GM12878 (cell line): ENCODE measurements at regions of chr1 and their contacts with region 1.

Region 1: GRCh38 chr1:203361945-203362719 is 11.2 kb upstream of the FMOD start:
- DNase-seq: no peak
- ATAC-seq: peak; percentile 91
- H3K4me3 ChIP-seq: no peak overlapping the region
- H3K27ac ChIP-seq: no peak overlapping the region
- H3K4me1 ChIP-seq: no peaks in the 10 kb centered on the region
- H3K27me3 ChIP-seq: peaks cover 0 to 5% of the 10 kb centered on the region in 2 experiments; a peak in 3 of 4 replicates
- CTCF ChIP-seq: no peak
- EP300 ChIP-seq: no peak
- POLR2A ChIP-seq: no peak
- RAD21 ChIP-seq: no peak

Region 2: GRCh38 chr1:203129501-203130231 is 232.5 kb before region 1 on chr1:
- CTCF ChIA-PET with region 1: no interaction called
- POLR2A ChIA-PET with region 1: no interaction called
- RAD21 ChIA-PET with region 1: no interaction called
- SMC1A ChIA-PET with region 1: no interaction called
- in situ Hi-C with region 1: no loop called
- intact Hi-C with region 1: no loop called
- DNase-seq: no peak
- ATAC-seq: no peak
- H3K4me3 ChIP-seq: no peak overlapping the region
- H3K27ac ChIP-seq: no peak overlapping the region
- H3K4me1 ChIP-seq: no peaks in the 10 kb centered on the region
- H3K27me3 ChIP-seq: peaks cover 6 to 8% of the 10 kb centered on the region in 2 experiments
- CTCF ChIP-seq: no peak
- EP300 ChIP-seq: no peak
- POLR2A ChIP-seq: no peak
- RAD21 ChIP-seq: no peak

Region 3: GRCh38 chr1:203280996-203281395 is 81.1 kb before region 1 on chr1:
- CTCF ChIA-PET with region 1: no interaction called
- POLR2A ChIA-PET with region 1: no interaction called
- RAD21 ChIA-PET with region 1: no interaction called
- SMC1A ChIA-PET with region 1: no interaction called
- in situ Hi-C with region 1: no loop called
- intact Hi-C with region 1: no loop called
- DNase-seq: no peak
- ATAC-seq: no peak
- H3K4me3 ChIP-seq: no peak overlapping the region
- H3K27ac ChIP-seq: no peak overlapping the region
- H3K4me1 ChIP-seq: peaks cover 46% of the 10 kb centered on the region
- H3K27me3 ChIP-seq: no peaks in the 10 kb centered on the region
- CTCF ChIP-seq: 0 out of 6 replicates have a peak, but pooled peaks of 1 of the 3 experiments have one; percentile 8
- EP300 ChIP-seq: no peak
- POLR2A ChIP-seq: no peak
- RAD21 ChIP-seq: no peak

Region 4: GRCh38 chr1:203291201-203292096 is 70.7 kb before region 1 on chr1:
- CTCF ChIA-PET with region 1: no interaction called
- POLR2A ChIA-PET with region 1: no interaction called
- RAD21 ChIA-PET with region 1: no interaction called
- SMC1A ChIA-PET with region 1: no interaction called
- in situ Hi-C with region 1: no loop called
- intact Hi-C with region 1: no loop called
- DNase-seq: no peak
- ATAC-seq: no peak
- H3K4me3 ChIP-seq: peak overlapping the region; percentile 24
- H3K27ac ChIP-seq: peak overlapping the region; percentile 100
- H3K4me1 ChIP-seq: peaks cover 58% of the 10 kb centered on the region
- H3K27me3 ChIP-seq: no peaks in the 10 kb centered on the region
- CTCF ChIP-seq: no peak
- EP300 ChIP-seq: 0 out of 4 replicates have a peak, but pooled peaks of 1 of the 2 experiments have one; percentile 13
- POLR2A ChIP-seq: no peak
- RAD21 ChIP-seq: no peak

Region 5: GRCh38 chr1:203346060-203346768 is 15.9 kb before region 1 on chr1:
- CTCF ChIA-PET with region 1: interaction called, 184 read pairs
- POLR2A ChIA-PET with region 1: interaction called, 4 read pairs
- RAD21 ChIA-PET with region 1: interaction called, 6 read pairs
- SMC1A ChIA-PET with region 1: interaction called, 21 read pairs
- in situ Hi-C with region 1: no loop called
- intact Hi-C with region 1: no loop called
- DNase-seq: no peak
- ATAC-seq: no peak
- H3K4me3 ChIP-seq: no peak overlapping the region
- H3K27ac ChIP-seq: no peak overlapping the region
- H3K4me1 ChIP-seq: no peaks in the 10 kb centered on the region
- H3K27me3 ChIP-seq: 0 out of 4 replicates have a peak, but pooled peaks cover 0 to 2% of the 10 kb centered on the region in 2 experiments
- CTCF ChIP-seq: no peak
- EP300 ChIP-seq: no peak
- POLR2A ChIP-seq: no peak
- RAD21 ChIP-seq: no peak

Region 6: DNA sequence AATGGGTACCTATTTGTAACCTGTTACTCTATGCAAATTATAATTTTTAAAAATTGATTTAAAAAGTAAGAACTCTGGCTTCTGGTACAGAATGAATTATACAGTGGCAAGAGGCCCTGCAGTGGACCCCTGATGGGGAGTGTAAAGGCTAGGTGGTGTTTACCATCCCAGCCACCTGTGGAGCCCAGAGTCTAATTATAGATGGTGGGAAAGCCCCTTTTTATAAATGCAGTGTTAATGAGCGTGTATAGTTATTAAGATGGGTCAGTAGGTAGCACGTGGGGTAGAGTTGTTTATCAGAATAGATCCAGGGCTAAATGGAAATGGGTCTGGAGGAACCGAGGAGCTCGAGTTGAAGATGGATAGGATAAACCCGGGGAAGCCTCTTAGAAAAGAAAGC is 99.6 kb after region 1 on chr1:
- CTCF ChIA-PET with region 1: no interaction called
- POLR2A ChIA-PET with region 1: no interaction called
- RAD21 ChIA-PET with region 1: no interaction called
- SMC1A ChIA-PET with region 1: no interaction called
- in situ Hi-C with region 1: no loop called
- intact Hi-C with region 1: no loop called
- DNase-seq: no peak
- ATAC-seq: peak; percentile 60
- H3K4me3 ChIP-seq: no peak overlapping the region
- H3K27ac ChIP-seq: no peak overlapping the region
- H3K4me1 ChIP-seq: no peaks in the 10 kb centered on the region
- H3K27me3 ChIP-seq: no peaks in the 10 kb centered on the region; a peak in 1 of 4 replicates
- CTCF ChIP-seq: no peak
- EP300 ChIP-seq: no peak
- POLR2A ChIP-seq: no peak
- RAD21 ChIP-seq: no peak